Upper lobe of right lung (tissue), 1 donor: ENCODE measurements at regions of chr17 and their contacts with region 1.

Region 1: DNA sequence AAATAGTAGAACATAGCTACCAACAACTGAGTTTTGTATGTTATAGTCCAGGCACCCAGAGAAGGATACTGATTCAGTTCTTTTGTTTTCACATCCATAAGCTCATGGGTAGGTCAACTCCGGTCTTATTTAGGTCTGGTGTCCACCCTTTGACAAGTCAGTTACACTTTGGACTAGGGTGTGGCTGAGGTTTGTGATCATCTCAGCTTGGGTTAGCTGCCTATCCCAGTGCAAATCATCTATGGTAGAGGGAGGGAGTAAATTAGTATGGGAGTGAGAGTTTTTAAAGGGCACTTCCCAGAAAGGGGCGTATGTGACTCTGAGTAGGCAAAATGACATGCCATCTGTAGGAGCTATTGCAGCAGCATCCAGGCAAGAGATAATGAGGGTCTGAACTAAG is 66.1 kb downstream of the TANC2 start:
- DNase-seq: no peak
- ATAC-seq: no peak
- H3K4me3 ChIP-seq: no peak overlapping the region
- H3K27ac ChIP-seq: no peak overlapping the region
- H3K4me1 ChIP-seq: no peaks in the 10 kb centered on the region
- H3K27me3 ChIP-seq: no peaks in the 10 kb centered on the region
- CTCF ChIP-seq: no peak

Region 2: GRCh38 chr17:62714016-62714746 is 318.0 kb before region 1 on chr17:
- intact Hi-C with region 1: loop called (anchors 5 kb)
- DNase-seq: no peak
- ATAC-seq: no peak
- H3K4me3 ChIP-seq: no peak overlapping the region
- H3K27ac ChIP-seq: no peak overlapping the region
- H3K4me1 ChIP-seq: no peaks in the 10 kb centered on the region
- H3K27me3 ChIP-seq: no peaks in the 10 kb centered on the region
- CTCF ChIP-seq: no peak

Region 3: DNA sequence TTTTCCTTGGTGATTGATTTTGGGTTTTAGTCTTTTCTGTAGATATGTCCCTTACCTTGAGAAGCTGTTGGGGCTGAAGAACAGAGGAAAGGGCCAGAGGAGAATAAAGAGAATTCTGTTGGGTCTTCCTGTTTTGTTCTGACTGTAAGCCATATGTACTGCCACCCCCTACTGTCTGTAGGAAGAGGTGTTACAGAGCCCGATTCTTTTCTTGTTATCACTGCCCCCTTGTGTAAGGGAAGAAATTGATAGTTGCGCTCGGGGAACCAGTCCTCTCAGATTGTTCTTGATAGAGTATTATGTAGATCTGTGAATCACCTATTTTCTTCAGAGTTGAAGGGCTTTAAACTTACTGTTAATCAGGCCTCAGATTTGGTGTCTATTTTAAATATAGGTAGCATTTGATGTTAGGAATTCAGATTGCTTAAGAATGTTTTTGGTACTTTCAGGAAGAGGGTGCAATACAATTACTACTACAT is 63.7 kb before region 1 on chr17:
- intact Hi-C with region 1: no loop called
- DNase-seq: no peak
- ATAC-seq: peak; percentile 74
- H3K4me3 ChIP-seq: peak overlapping the region; percentile 78
- H3K27ac ChIP-seq: no peak overlapping the region
- H3K4me1 ChIP-seq: peaks cover 23% of the 10 kb centered on the region
- H3K27me3 ChIP-seq: no peaks in the 10 kb centered on the region
- CTCF ChIP-seq: peak; percentile 78

Region 4: DNA sequence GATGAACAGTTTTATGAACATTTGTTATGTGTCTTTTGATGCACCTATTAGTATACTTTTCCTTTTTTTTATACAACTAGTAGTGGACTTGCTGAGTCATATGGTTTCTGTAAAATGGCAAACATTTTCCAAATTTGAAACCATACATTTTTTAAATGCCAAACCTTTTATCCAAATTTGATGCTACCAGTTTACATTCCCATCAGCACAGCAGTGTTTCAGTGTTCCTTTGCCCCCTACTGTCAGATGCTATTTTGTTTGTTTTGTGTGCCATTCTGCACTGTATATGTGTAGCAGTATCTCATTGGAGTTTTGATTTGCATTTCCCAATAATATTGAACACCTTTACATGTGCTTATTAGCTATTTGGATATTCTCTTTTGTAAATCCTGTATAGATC is 153.3 kb after region 1 on chr17:
- intact Hi-C with region 1: no loop called
- DNase-seq: no peak
- ATAC-seq: no peak
- H3K4me3 ChIP-seq: no peak overlapping the region
- H3K27ac ChIP-seq: no peak overlapping the region
- H3K4me1 ChIP-seq: no peaks in the 10 kb centered on the region
- H3K27me3 ChIP-seq: no peaks in the 10 kb centered on the region
- CTCF ChIP-seq: no peak